ENCODE measurements at regions of chr9 and their contacts with region 1.

Region 1: DNA sequence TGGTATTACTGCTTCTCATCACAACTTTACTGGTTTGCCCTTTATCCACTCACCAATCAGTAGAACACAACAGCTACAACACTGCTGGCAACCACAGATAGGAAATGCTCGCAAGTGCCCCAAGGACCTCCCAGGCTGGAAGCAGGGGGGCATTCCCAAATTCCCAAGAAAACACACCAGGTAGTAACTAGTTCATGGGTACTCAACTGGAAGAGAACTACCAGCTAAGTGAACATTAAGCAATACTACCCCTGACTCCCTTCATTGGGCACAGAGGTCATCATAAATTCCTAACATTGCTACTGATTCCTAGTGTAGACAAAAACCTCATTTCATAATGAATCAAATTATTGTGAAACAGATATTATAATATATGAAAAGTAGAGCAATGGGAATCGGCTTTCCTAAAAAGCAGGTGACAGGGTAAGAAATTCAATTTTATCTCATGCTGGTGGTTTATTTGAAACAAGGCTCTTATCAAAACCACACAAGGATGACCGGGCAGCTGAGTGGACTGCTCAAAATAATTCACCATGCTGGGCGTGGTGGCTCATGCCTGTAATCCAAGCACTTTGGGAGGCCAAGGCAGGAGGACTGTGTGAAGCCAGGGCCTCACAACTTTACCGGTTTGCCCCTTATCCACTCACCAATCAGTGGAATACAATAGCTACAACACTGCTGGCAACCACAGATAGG is 81.6 kb downstream of the TLE1 start:
- DNase-seq: no peak
- ATAC-seq: no peak
- H3K4me3 ChIP-seq: no peak overlapping the region
- H3K4me3 Mint-ChIP-seq: no peak overlapping the region
- H3K27ac ChIP-seq: no peak overlapping the region
- H3K27ac Mint-ChIP-seq: no peak overlapping the region
- H3K4me1 ChIP-seq: no peaks in the 10 kb centered on the region
- H3K4me1 Mint-ChIP-seq: no peaks in the 10 kb centered on the region
- H3K27me3 ChIP-seq: no peaks in the 10 kb centered on the region
- H3K27me3 Mint-ChIP-seq: no peaks in the 10 kb centered on the region
- CTCF ChIP-seq: no peak

Region 2: DNA sequence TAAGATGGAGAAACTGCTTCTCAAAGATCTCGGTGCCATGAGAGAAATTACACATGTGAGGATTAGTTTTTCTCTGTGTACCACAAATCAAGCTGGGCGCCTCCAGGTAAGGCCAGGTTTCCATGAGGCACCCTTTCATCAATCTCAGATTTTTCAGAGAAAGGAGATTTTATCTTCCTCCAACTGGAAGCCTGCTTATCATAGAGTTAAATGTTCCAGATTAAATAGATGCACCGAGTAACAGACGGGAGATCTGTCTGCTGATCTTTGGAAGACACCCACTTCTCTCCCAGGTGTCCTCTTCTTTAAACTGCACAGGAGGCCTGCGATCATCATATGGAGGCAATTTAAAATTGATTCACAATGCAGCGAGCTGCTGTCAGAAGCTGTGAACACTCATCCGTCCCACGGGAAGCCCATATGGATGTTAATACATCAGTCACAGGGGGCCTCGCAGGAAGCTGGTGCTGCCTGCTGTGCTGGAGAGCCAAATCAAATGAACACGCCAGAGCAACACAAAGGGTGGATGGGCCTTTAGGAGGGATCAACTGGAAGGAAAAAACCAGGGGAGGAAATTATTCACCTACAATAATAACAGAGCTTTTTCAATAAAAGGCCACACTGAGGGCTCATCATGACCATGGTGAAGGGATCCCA is 11.7 kb before region 1 on chr9:
- CTCF ChIA-PET with region 1: no interaction called
- POLR2A ChIA-PET with region 1: no interaction called
- intact Hi-C with region 1: loop called in 1 of 2 experiments (anchors 1 kb)
- DNase-seq: no peak
- ATAC-seq: no peak
- H3K4me3 ChIP-seq: no peak overlapping the region
- H3K4me3 Mint-ChIP-seq: no peak overlapping the region
- H3K27ac ChIP-seq: no peak overlapping the region
- H3K27ac Mint-ChIP-seq: no peak overlapping the region
- H3K4me1 ChIP-seq: no peaks in the 10 kb centered on the region
- H3K4me1 Mint-ChIP-seq: peaks cover 9% of the 10 kb centered on the region
- H3K27me3 ChIP-seq: no peaks in the 10 kb centered on the region
- H3K27me3 Mint-ChIP-seq: peaks cover 4% of the 10 kb centered on the region
- CTCF ChIP-seq: no peak

Measured in CD4-positive, alpha-beta T cell (primary cell).